K562 (cell line): ENCODE measurements at regions of chr15 and their contacts with region 1.

Region 1: DNA sequence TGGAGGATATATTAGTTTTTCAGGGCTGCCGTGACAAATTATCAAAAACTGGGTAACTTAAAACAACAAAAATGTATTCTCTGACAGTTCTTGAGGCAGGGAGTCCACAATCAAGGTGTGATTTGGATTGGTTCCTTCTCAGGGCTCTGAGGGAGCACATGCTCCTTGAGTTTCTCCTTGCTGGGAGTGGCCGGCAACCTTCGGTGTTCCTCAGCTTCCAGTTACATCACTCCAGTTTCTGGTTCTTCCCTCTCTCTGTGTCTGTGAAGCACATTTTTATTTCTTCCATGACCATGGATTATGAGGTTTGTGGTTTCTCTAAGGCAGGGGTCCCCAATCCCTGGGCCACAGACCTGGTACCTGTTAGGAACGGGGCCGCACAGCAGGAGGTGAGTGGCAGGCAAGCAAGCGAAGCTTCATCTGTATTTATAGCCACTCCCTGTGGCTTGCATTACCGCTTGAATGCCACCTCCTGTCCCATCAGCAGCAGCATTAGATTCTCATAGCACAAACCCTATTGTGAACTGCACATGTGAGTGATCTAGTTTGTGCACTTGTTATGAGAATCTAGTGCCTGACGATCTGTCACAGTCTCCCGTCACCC is 24.3 kb downstream of the LRRC28 start:
- DNase-seq: no peak
- ATAC-seq: no peak
- H3K4me3 ChIP-seq: no peak overlapping the region
- H3K27ac ChIP-seq: no peak overlapping the region
- H3K4me1 ChIP-seq: no peaks in the 10 kb centered on the region
- H3K27me3 ChIP-seq: no peaks in the 10 kb centered on the region
- CTCF ChIP-seq: no peak
- EP300 ChIP-seq: no peak
- POLR2A ChIP-seq: no peak
- RAD21 ChIP-seq: no peak

Region 2: DNA sequence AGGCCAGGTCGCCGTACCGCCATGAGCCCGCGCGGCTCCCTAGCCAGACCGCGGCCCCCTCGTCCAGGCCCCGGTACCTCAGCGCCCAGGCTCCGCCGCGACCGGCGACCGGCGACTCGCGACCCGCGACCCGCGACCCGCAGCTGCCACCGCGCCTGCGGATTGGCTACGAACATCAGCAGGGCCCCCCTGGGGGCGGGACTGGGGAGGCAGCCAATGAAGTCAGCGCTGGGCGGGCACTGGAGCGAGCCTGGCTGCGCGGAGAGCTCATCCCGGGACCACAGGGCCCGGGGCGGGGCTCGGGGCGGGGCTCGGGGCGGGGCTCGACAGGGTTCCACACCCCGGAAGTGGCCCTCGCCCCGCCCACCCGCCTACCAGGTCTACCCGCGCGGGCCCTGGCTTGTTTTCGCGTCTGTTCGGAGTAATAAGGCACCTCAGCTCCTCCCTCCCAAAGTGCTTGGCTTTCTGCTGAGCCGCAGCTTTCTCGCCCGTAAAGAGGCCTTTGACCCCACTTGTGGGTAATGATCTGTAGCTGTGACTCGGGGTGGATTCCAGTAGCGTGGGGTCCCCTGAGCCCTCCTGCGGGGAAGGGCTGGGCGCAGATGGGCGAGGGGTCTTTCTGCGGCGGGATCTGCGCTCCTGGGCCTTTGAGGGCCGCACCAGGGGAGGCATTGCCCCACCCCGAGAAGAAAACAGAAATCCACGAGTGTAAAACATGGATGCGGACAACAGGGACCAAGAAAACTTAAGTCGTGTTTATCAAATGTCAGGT is 457.8 kb after region 1 on chr15 and contains the start of gene LYSMD4:
- CTCF ChIA-PET with region 1: interaction called, 6 read pairs
- POLR2A ChIA-PET with region 1: no interaction called
- in situ Hi-C with region 1: loop called (anchors 25 kb)
- intact Hi-C with region 1: no loop called
- DNase-seq: peak; percentile 85 to 90 (median 89)
- ATAC-seq: peak; percentile 98
- H3K4me3 ChIP-seq: peak within 1 kb of the TSS; percentile 43
- H3K27ac ChIP-seq: peak within 1 kb of the TSS; percentile 63; the same call in 2 of the 3 replicates
- H3K4me1 ChIP-seq: peaks cover 3 to 19% of the 10 kb centered on the region in 2 experiments; a peak in 3 of 5 replicates
- H3K27me3 ChIP-seq: peaks cover 0 to 8% of the 10 kb centered on the region in 2 experiments; a peak in 1 of 5 replicates
- CTCF ChIP-seq: no peak
- EP300 ChIP-seq: no peak
- POLR2A ChIP-seq: 0 out of 2 replicates have a peak, but pooled peaks have one; percentile 41
- RAD21 ChIP-seq: no peak
- polyA plus RNA-seq, gene LYSMD4: 0.46 to 0.70 TPM